Head of caudate nucleus (tissue), 42 donors: ENCODE measurements at regions of chr6 and their contacts with region 1.

Region 1: GRCh38 chr6:163965426-163966348 is 551.2 kb downstream of the QKI start:
- DNase-seq: peak in 1 of 42 donors; percentile 48

Region 2: GRCh38 chr6:164106345-164106769 is 140.7 kb after region 1 on chr6:
- intact Hi-C with region 1: loop called (anchors 10 kb)
- DNase-seq: peak in 41 of 42 donors; percentile 37 to 86 (median 66)